PC-3 (cell line): ENCODE measurements at regions of chr1 and their contacts with region 1.

Region 1: GRCh38 chr1:115138968-115139367 is 49.7 kb upstream of the TSPAN2 start:
- DNase-seq: peak; percentile 95
- ATAC-seq: peak; percentile 66
- H3K4me3 ChIP-seq: no peak overlapping the region
- H3K27ac ChIP-seq: no peak overlapping the region
- H3K4me1 ChIP-seq: peaks cover 53% of the 10 kb centered on the region
- H3K27me3 ChIP-seq: no peaks in the 10 kb centered on the region
- CTCF ChIP-seq: peak; percentile 93

Region 2: GRCh38 chr1:114794038-114794437 is 344.9 kb before region 1 on chr1:
- CTCF ChIA-PET with region 1: no interaction called
- POLR2A ChIA-PET with region 1: no interaction called
- intact Hi-C with region 1: no loop called
- DNase-seq: no peak
- ATAC-seq: no peak
- H3K4me3 ChIP-seq: no peak overlapping the region
- H3K27ac ChIP-seq: no peak overlapping the region
- H3K4me1 ChIP-seq: no peaks in the 10 kb centered on the region
- H3K27me3 ChIP-seq: peaks cover 63% of the 10 kb centered on the region
- CTCF ChIP-seq: no peak

Region 3: GRCh38 chr1:115210302-115210711 is 71.3 kb after region 1 on chr1:
- CTCF ChIA-PET with region 1: interaction called, 8 read pairs
- POLR2A ChIA-PET with region 1: no interaction called
- intact Hi-C with region 1: loop called (anchors 5 kb)
- DNase-seq: peak; percentile 97
- ATAC-seq: peak; percentile 83
- H3K4me3 ChIP-seq: no peak overlapping the region
- H3K27ac ChIP-seq: peak overlapping the region; percentile 89
- H3K4me1 ChIP-seq: peaks cover 49% of the 10 kb centered on the region
- H3K27me3 ChIP-seq: no peaks in the 10 kb centered on the region
- CTCF ChIP-seq: no peak

Region 4: GRCh38 chr1:115463363-115463746 is 324.4 kb after region 1 on chr1:
- CTCF ChIA-PET with region 1: interaction called, 14 read pairs
- POLR2A ChIA-PET with region 1: no interaction called
- intact Hi-C with region 1: loop called (anchors 1 kb)
- DNase-seq: peak; percentile 63
- ATAC-seq: peak; percentile 75
- H3K4me3 ChIP-seq: no peak overlapping the region
- H3K27ac ChIP-seq: no peak overlapping the region
- H3K4me1 ChIP-seq: peaks cover 11% of the 10 kb centered on the region
- H3K27me3 ChIP-seq: no peaks in the 10 kb centered on the region
- CTCF ChIP-seq: peak; percentile 82

Region 5: DNA sequence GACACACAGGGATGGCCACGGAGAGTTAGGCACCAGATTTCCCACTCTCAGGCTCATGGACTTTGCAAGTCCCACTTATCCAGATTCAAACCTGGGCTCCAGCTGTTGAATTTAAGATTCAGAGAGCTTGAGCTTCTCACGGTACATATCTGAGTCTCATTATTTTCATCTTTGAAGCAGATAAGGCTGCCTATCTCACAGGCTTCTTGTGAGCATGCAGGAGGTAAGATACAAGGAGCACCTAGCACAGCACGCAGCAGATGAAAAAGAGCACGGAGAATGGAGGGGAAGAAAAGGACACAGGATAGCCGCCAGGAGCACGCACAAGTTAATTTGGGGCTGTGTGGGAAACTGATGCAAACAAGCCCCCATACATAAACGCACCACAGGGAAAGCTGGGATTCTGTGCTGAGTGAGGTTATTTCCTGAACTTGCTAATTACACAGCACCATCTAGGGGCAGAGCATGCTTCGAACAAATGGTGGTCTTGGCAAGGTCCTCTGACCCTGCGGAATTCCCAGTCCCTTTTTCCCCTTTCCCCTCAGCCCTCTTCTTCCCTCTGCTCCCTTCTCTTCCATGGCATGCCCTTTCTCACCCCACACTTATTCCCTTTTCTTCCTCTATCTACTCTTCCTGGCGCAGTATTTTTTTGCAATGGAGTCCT is 368.1 kb after region 1 on chr1:
- CTCF ChIA-PET with region 1: no interaction called
- POLR2A ChIA-PET with region 1: no interaction called
- intact Hi-C with region 1: loop called (anchors 1 kb)
- DNase-seq: peak; percentile 47
- ATAC-seq: peak; percentile 48
- H3K4me3 ChIP-seq: no peak overlapping the region
- H3K27ac ChIP-seq: peak overlapping the region; percentile 31
- H3K4me1 ChIP-seq: peaks cover 52% of the 10 kb centered on the region
- H3K27me3 ChIP-seq: no peaks in the 10 kb centered on the region
- CTCF ChIP-seq: peak; percentile 65

Region 6: GRCh38 chr1:115595279-115596079 is 456.5 kb after region 1 on chr1:
- CTCF ChIA-PET with region 1: interaction called, 6 read pairs
- POLR2A ChIA-PET with region 1: no interaction called
- intact Hi-C with region 1: loop called (anchors 1 kb)
- DNase-seq: peak; percentile 97
- ATAC-seq: peak; percentile 96
- H3K4me3 ChIP-seq: no peak overlapping the region
- H3K27ac ChIP-seq: peak overlapping the region; percentile 1; the same call in 1 of the 2 replicates
- H3K4me1 ChIP-seq: peaks cover 20% of the 10 kb centered on the region
- H3K27me3 ChIP-seq: no peaks in the 10 kb centered on the region
- CTCF ChIP-seq: peak; percentile 96